Dendritic cell treated with granulocyte-macrophage colony-stimulating factor and Interleukin-4, amounts not matched to agents 40 ng/mL and 50 ng/mL, for 4 days (primary cell): ENCODE measurements at regions of chr6 and their contacts with region 1.

Region 1: DNA sequence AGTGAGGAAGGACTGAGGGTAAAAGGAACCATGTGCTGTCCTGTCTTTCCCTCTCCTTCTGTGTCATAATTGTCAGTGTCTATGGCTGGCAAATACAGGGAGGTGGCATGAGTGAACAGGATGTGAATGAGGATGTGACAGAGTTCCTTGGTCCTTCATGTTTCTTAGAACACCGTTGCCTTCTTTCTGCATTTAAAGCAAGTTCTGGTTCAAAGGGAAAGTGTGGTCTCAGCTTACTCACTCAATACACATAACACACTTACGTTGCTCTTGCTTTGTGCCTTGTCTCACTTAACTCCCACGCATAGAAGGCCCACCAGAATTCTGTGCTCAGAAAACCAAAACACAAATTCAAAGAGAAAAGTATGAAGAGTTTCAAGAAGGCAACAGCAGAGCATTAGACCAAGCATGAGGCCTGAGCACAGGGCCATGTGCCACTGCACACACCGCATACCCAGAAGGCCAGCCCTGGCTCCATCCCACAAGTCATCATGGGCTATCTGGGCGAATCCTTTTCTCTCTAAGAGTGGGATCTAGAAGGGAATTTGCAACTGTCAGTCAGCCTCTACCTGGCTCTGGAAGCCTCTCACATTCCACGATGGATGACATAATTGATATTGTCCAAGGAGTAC is 38.9 kb upstream of the SAYSD1 start:
- H3K4me3 Mint-ChIP-seq: no peak overlapping the region
- H3K27ac Mint-ChIP-seq: no peak overlapping the region
- H3K4me1 Mint-ChIP-seq: peaks cover 13% of the 10 kb centered on the region
- H3K27me3 Mint-ChIP-seq: peaks cover 33% of the 10 kb centered on the region

Region 2: DNA sequence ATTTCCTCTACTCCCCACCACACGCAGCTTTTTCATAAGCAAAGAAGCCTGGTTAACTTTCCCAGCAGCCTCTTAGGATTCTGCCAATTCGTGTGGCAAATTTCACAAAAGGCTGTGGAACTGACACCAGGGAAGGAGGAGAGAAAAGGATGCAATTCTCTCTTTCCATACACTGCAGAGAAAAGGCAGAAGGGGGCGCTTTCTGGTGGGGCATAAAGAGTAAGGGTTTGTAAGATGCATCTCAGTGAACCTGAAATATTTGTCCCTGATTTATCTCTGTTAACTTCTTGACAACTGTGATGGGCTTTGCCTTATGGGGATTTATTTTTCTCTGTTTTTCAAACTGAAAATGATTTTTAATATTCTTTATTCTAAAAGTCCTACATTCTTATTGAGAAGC is 150.8 kb before region 1 on chr6:
- intact Hi-C with region 1: loop called (anchors 10 kb)
- H3K4me3 Mint-ChIP-seq: no peak overlapping the region
- H3K27ac Mint-ChIP-seq: no peak overlapping the region
- H3K4me1 Mint-ChIP-seq: no peaks in the 10 kb centered on the region
- H3K27me3 Mint-ChIP-seq: peaks cover 39% of the 10 kb centered on the region

Region 3: GRCh38 chr6:39169439-39170344 is 15.8 kb after region 1 on chr6:
- intact Hi-C with region 1: no loop called
- H3K4me3 Mint-ChIP-seq: no peak overlapping the region
- H3K27ac Mint-ChIP-seq: peak overlapping the region; percentile 15
- H3K4me1 Mint-ChIP-seq: peaks cover 40% of the 10 kb centered on the region
- H3K27me3 Mint-ChIP-seq: peaks cover 18% of the 10 kb centered on the region

Region 4: DNA sequence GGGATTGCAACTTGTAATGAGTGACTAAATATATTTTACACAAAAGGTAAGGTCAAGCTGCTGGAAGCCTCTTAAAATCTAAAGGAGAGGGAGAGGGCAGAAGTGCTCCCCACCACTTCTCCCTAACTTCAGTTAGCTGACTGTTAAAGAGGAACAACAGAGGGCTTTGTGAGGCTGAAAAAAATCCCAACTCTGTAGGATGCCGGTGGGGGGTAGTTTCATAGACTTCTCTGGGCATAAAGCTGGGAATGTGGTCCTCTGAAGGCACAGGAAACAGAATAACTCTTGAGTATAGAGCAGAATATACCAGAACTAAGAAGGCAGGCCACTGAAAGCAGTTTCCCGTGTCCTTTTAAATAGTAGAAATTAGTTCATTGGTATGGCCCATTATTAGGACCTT is 499.7 kb after region 1 on chr6:
- intact Hi-C with region 1: no loop called
- H3K4me3 Mint-ChIP-seq: no peak overlapping the region
- H3K27ac Mint-ChIP-seq: no peak overlapping the region
- H3K4me1 Mint-ChIP-seq: no peaks in the 10 kb centered on the region
- H3K27me3 Mint-ChIP-seq: peaks cover 5% of the 10 kb centered on the region